ENCODE measurements at regions of chr1 and their contacts with region 1.

Region 1: GRCh38 chr1:99849744-99850458 is at the start of gene AGL:
- DNase-seq: peak; percentile 82 to 88
- ATAC-seq: peak; percentile 96 to 99 (median 97)
- H3K4me3 ChIP-seq: peak within 1 kb of the TSS; percentile 40 to 91 (median 82)
- H3K27ac ChIP-seq: peak within 1 kb of the TSS; percentile 80 to 94 (median 92)
- H3K4me1 ChIP-seq: peaks cover 0 to 35% (median 14%) of the 10 kb centered on the region in 9 donors
- H3K27me3 ChIP-seq: no peaks in the 10 kb centered on the region
- CTCF ChIP-seq: no peak
- total RNA-seq, gene AGL: 38.5 to 73.1 (median 58.8) TPM

Region 2: DNA sequence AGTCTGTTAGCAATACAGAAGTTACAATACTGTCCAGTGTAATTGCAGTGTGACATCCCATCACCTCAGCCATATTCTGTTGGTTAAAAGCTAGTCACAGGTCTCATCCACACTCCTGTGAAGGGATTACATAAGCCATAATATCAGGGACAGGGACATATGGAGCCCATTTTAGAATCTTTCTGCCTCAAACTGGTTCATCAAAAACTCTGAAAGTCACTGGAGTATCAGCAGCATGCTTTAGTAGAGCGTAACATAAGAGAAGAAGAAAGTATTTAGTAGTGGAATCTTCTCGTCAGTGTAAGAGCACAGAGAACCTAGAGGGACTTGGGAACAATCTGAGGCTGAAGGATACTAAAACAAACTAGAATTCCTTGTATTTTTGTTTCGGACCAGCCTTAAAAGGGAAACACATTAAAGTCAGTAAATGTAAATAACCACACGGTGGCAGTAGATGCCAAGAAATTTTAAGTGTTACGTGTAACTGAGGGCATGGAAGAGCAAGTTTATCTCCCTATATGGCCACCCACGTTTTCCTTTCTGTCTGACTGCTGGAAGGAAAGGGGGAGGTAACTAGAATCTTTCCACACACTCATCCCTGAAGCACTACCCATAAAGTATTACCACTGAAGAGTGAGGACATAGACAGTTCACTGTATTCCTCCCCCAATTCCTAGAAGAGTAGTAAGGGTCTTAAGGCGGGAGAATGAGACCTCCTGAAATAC is 41.3 kb before region 1 on chr1:
- intact Hi-C with region 1: loop called in 1 of 10 experiments (anchors 5 kb)
- DNase-seq: peak in 1 of 2 donors; percentile 54
- ATAC-seq: peak; percentile 87 to 96 (median 90)
- H3K4me3 ChIP-seq: peak overlapping the region in 4 of 10 donors; percentile 9 to 32 (median 16)
- H3K27ac ChIP-seq: peak overlapping the region in 4 of 10 donors; percentile 26 to 61 (median 45)
- H3K4me1 ChIP-seq: peaks cover 0 to 13% (median 6%) of the 10 kb centered on the region in 9 donors
- H3K27me3 ChIP-seq: peaks cover 0 to 10% (median 8%) of the 10 kb centered on the region in 7 donors
- CTCF ChIP-seq: peak; percentile 48 to 77 (median 71)

Region 3: DNA sequence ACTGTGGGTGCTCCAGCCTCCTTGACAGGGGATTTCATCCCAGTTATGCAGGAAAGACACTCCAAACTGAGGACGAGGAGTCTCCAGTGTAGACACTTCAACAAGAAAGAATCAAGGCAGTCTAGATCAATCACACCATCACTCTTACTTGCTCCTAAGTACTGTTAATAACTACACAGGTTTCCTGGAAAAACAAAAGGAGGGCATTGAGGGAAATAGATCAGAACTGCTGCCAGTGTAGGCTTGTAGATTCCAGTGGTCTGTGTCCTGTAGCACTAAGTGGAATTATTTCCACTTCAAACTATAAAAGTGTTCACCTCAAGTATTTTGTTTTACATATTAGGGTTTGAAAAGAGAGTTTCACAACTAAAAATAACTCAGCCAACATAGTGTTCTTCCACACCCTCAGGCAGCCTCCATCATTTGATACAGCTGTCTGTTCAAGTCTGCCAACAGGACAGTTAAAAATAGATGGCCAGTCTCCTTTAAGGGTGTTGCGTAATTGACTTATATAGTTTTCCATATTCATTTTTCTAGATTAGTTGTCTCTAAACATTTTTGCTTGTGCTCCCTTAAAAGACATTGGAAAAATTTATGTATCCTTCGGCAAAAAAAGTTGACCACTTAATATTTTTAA is 31.7 kb before region 1 on chr1:
- intact Hi-C with region 1: loop called in 1 of 10 experiments (anchors 5 kb)
- DNase-seq: peak in 1 of 2 donors; percentile 9
- ATAC-seq: peak; percentile 34 to 94 (median 84)
- H3K4me3 ChIP-seq: no peak overlapping the region
- H3K27ac ChIP-seq: peak overlapping the region in 4 of 10 donors; percentile 45 to 63 (median 56)
- H3K4me1 ChIP-seq: peaks cover 0 to 8% (median 0%) of the 10 kb centered on the region in 9 donors
- H3K27me3 ChIP-seq: peaks cover 0 to 5% (median 0%) of the 10 kb centered on the region in 7 donors
- CTCF ChIP-seq: no peak

Region 4: GRCh38 chr1:99869304-99869703 is 19.4 kb after region 1 on chr1:
- intact Hi-C with region 1: no loop called
- DNase-seq: no peak
- ATAC-seq: no peak
- H3K4me3 ChIP-seq: no peak overlapping the region
- H3K27ac ChIP-seq: no peak overlapping the region
- H3K4me1 ChIP-seq: peaks cover 0 to 10% (median 0%) of the 10 kb centered on the region in 9 donors
- H3K27me3 ChIP-seq: no peaks in the 10 kb centered on the region
- CTCF ChIP-seq: no peak